PC-3 (cell line): ENCODE measurements at regions of chr5 and their contacts with region 1.

Region 1: GRCh38 chr5:14270209-14270702 is 127.1 kb downstream of the TRIO start:
- DNase-seq: peak; percentile 83
- ATAC-seq: peak; percentile 5
- H3K4me3 ChIP-seq: no peak overlapping the region
- H3K27ac ChIP-seq: peak overlapping the region; percentile 96
- H3K4me1 ChIP-seq: peaks cover 55% of the 10 kb centered on the region
- H3K27me3 ChIP-seq: no peaks in the 10 kb centered on the region
- CTCF ChIP-seq: peak; percentile 95

Region 2: DNA sequence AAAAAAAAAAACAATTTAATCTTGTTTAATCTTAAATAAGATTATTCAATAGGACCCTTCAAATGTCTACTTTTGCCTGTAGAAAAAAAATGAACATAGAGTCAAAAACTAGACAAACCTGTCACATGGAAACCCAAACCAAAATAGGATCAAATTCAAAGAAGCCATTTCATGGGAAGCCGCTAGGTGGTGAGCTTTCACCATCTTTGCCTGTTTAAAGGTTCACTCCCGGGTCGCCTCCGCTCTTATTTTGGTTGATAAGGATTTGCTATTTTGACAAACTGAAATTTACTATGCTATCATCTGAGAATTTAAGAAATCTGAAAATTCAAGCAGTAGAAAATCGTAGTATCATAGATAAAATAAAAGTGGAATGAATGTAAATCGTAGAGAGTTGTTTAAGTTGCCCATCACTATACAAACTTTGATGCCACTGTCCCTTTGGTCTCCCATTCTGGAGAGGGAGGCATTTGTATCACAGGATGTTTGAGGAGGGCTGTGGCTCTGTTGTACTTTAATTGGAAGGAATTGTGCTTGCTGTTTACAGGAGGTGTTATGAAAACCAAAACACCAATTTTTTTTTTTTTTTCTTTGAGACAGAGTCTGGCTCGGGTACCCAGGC is 282.3 kb before region 1 on chr5:
- CTCF ChIA-PET with region 1: no interaction called
- POLR2A ChIA-PET with region 1: no interaction called
- intact Hi-C with region 1: loop called (anchors 1 kb)
- DNase-seq: peak; percentile 95
- ATAC-seq: peak; percentile 41
- H3K4me3 ChIP-seq: no peak overlapping the region
- H3K27ac ChIP-seq: peak overlapping the region; percentile 55
- H3K4me1 ChIP-seq: peaks cover 35% of the 10 kb centered on the region
- H3K27me3 ChIP-seq: no peaks in the 10 kb centered on the region
- CTCF ChIP-seq: peak; percentile 98

Region 3: DNA sequence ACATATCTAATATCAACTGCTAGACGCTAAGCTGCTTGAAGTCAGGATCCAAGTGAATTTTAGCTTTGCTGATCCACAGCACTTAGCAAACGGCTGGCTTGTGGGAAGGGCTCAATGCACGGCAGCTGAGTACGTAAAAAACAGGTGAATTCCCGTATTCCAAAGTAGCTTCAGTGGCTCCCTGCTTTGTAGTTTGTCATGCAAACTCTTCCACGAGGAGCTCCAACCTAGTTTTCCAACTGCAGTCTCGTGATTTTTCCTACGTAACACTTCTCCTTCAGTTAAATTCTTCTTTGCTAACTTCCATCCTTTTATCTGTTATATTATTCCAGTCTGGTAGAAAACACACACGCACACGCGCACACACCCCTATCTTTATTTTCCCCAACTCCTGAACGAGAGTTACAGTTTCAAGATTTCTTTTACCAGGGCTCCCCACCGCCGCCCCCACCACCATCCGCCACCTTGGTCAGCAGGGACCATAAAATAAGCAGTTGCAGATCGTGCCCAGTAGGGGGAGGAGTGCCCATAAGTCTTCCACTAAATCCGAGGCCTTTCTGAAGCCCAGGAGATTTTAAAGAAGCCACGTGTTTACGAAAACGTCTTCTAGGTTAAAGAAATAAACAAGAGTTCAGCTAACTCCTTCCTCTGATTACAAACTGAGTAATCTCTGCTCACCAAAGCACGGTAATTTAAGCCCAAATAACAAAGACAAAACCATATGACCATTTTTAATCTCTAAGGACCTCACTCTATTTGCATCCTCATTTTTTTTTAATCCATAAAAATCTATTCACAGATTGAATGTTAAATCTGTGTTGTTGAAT is 161.9 kb before region 1 on chr5:
- CTCF ChIA-PET with region 1: interaction called, 4 read pairs
- POLR2A ChIA-PET with region 1: no interaction called
- intact Hi-C with region 1: loop called (anchors 1 kb)
- DNase-seq: peak; percentile 91
- ATAC-seq: peak; percentile 78
- H3K4me3 ChIP-seq: peak overlapping the region; percentile 34
- H3K27ac ChIP-seq: peak overlapping the region; percentile 93
- H3K4me1 ChIP-seq: peaks cover 63% of the 10 kb centered on the region
- H3K27me3 ChIP-seq: no peaks in the 10 kb centered on the region
- CTCF ChIP-seq: peak; percentile 88

Region 4: GRCh38 chr5:14156650-14157493 is 113.4 kb before region 1 on chr5:
- CTCF ChIA-PET with region 1: interaction called, 7 read pairs
- POLR2A ChIA-PET with region 1: interaction called, 3 read pairs
- intact Hi-C with region 1: loop called (anchors 1 kb)
- DNase-seq: peak; percentile 98
- ATAC-seq: peak; percentile 88
- H3K4me3 ChIP-seq: peak overlapping the region; percentile 63
- H3K27ac ChIP-seq: peak overlapping the region; percentile 94
- H3K4me1 ChIP-seq: peaks cover 74% of the 10 kb centered on the region
- H3K27me3 ChIP-seq: no peaks in the 10 kb centered on the region
- CTCF ChIP-seq: no peak

Region 5: DNA sequence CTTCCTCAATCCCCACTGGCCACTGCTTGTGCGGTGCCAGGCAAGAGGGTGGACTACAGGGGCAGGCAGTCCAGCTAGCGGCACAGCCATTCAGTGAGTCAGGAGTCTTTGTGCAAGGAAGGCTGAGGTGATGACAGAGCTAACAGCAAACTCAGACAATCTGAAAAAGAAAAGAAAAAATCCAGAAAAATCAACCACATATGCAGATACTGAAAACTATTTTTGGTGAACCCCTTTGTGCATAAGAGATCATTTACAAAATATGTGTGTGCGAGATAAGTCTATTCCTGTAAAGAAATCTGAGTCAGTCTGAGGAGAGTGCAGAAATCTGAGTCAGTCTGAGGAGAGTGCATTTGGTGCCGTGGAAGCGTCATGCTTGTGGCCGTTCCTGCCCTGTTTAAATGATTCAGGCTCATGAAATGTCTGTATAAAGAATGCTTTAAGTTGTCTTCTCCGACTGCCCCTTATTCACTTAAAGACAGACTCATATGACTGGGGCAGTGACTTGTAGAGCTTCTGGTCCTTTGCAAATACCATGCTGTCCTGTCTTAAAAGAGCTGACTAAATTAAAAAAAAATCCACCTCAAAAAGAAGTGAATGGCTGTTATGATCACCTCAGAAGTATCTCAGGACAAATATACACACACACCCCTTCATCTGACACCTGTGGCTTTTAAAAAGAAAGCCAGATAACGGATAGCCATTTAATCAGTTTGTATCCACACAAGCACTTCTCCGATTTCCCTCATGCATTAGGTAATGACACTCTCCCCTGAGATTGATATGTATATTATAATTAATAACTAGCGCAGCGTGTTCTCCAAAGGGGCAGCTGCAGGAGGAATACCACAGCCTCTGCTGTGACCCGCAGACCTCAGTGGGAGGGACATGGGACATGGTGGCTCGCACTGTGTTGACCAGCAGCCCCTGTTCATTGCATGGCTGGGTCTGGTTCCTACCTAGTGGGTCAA is 79.8 kb before region 1 on chr5:
- CTCF ChIA-PET with region 1: no interaction called
- POLR2A ChIA-PET with region 1: interaction called, 4 read pairs
- intact Hi-C with region 1: loop called (anchors 1 kb)
- DNase-seq: peak; percentile 99
- ATAC-seq: peak; percentile 84
- H3K4me3 ChIP-seq: peak overlapping the region; percentile 47
- H3K27ac ChIP-seq: peak overlapping the region; percentile 94
- H3K4me1 ChIP-seq: peaks cover 83% of the 10 kb centered on the region
- H3K27me3 ChIP-seq: no peaks in the 10 kb centered on the region
- CTCF ChIP-seq: no peak

Region 6: DNA sequence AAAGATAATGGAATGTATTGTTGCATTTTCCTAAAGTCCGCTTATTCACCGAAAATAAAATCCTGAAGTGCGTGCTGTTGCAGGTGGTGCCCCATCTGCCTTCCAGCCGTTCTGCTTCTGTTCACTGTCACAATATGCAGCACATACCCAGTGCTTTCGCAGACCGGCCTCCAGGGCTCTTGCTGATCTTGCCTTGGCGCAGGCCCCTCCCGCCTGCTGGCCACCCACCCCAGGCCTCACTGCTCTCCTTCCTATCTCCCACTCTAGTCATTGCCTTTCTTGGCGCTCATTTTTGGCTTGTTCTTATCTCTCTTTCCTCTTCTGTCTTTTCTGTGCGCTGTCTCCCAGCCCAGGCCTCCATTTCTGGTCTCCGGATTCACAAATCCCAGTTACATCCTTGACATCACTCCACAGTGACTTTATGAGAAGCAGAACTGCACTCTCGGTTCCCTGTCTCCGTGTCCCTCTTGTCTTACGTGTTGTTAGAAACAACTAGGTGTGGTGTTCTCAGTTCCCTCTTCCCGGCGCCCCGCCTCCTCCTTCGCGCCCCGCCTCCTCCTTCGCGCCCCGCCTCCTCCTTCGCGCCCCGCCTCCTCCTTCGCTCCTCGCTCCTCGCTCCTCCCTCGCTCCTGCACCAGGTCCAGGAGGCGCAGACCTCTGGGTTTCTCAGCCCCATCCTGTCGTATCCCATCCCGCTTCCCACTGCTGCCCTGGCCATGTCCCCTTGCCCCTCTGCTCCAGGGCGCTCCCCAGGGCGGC is 109.7 kb after region 1 on chr5:
- CTCF ChIA-PET with region 1: no interaction called
- POLR2A ChIA-PET with region 1: no interaction called
- intact Hi-C with region 1: no loop called
- DNase-seq: no peak
- ATAC-seq: no peak
- H3K4me3 ChIP-seq: no peak overlapping the region
- H3K27ac ChIP-seq: no peak overlapping the region
- H3K4me1 ChIP-seq: peaks cover 7% of the 10 kb centered on the region; the same call in 1 of the 2 replicates
- H3K27me3 ChIP-seq: no peaks in the 10 kb centered on the region
- CTCF ChIP-seq: no peak